ENCODE measurements at regions of chrX and their contacts with region 1.

Region 1: DNA sequence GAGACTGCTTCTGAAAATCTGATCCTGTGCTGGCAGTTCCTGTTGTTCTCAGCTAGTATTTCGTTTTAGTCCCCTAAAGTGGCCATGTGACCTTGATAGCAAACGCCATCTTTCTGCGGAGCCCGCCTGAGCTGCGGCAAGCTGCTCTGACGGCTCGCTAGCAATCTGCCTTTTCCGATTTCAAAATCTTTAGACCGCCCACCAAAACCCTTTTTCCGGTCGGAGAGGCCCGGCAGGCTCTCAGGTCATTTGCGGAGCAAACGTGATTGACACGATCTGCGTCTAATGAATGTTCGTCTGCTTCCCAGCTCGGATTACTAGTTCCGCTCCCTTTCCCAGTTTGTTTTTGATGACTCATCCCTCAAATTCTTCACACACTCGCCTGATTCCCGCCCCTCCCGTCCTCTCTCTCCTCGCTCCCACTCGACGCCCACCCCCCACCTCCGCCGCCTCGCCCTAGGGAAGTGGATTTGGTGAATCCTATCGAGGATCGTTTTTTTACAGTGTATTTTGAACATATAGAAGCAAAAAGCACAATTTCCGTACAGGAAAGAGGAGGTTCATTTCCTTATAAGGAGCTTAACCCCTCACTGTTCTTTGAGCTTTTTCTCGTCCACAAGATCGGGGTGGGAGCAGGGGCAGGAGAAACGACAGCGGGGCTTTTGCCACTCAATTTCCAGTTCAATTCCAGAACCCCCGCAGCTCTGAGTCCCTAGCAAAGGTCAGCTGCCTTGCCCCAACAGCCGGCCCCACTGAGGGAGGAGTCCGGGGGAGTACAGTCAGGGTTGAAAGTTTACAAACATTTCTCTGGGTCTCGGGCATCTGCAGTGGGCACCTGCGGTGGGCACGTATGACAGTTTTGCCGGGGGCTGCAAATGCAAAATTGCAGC is 37.5 kb downstream of the NLGN3 start:
- DNase-seq: peak; percentile 90
- ATAC-seq: peak; percentile 89
- H3K4me3 ChIP-seq: peak overlapping the region; percentile 60 to 77 (median 66)
- H3K4me3 Mint-ChIP-seq: peak overlapping the region; percentile 98
- H3K27ac ChIP-seq: peak overlapping the region; percentile 87 to 92
- H3K27ac Mint-ChIP-seq: peak overlapping the region; percentile 99
- H3K4me1 ChIP-seq: peaks cover 5 to 15% of the 10 kb centered on the region in 2 donors
- H3K4me1 Mint-ChIP-seq: peaks cover 15% of the 10 kb centered on the region
- H3K27me3 ChIP-seq: no peaks in the 10 kb centered on the region
- H3K27me3 Mint-ChIP-seq: no peaks in the 10 kb centered on the region
- CTCF ChIP-seq: no peak

Region 2: GRCh38 chrX:70769659-70770232 is 412.4 kb before region 1 on chrX:
- CTCF ChIA-PET with region 1: interaction called, 14 read pairs
- POLR2A ChIA-PET with region 1: no interaction called
- intact Hi-C with region 1: no loop called
- DNase-seq: peak; percentile 14
- ATAC-seq: no peak
- H3K4me3 ChIP-seq: no peak overlapping the region
- H3K4me3 Mint-ChIP-seq: no peak overlapping the region
- H3K27ac ChIP-seq: no peak overlapping the region
- H3K27ac Mint-ChIP-seq: no peak overlapping the region
- H3K4me1 ChIP-seq: no peaks in the 10 kb centered on the region
- H3K4me1 Mint-ChIP-seq: no peaks in the 10 kb centered on the region
- H3K27me3 ChIP-seq: no peaks in the 10 kb centered on the region
- H3K27me3 Mint-ChIP-seq: no peaks in the 10 kb centered on the region
- CTCF ChIP-seq: peak; percentile 62

Region 3: GRCh38 chrX:71017389-71017944 is 164.7 kb before region 1 on chrX:
- CTCF ChIA-PET with region 1: no interaction called
- POLR2A ChIA-PET with region 1: no interaction called
- intact Hi-C with region 1: no loop called
- DNase-seq: no peak
- ATAC-seq: no peak
- H3K4me3 ChIP-seq: no peak overlapping the region
- H3K4me3 Mint-ChIP-seq: no peak overlapping the region
- H3K27ac ChIP-seq: no peak overlapping the region
- H3K27ac Mint-ChIP-seq: no peak overlapping the region
- H3K4me1 ChIP-seq: no peaks in the 10 kb centered on the region
- H3K4me1 Mint-ChIP-seq: no peaks in the 10 kb centered on the region
- H3K27me3 ChIP-seq: no peaks in the 10 kb centered on the region
- H3K27me3 Mint-ChIP-seq: no peaks in the 10 kb centered on the region
- CTCF ChIP-seq: no peak

Region 4: DNA sequence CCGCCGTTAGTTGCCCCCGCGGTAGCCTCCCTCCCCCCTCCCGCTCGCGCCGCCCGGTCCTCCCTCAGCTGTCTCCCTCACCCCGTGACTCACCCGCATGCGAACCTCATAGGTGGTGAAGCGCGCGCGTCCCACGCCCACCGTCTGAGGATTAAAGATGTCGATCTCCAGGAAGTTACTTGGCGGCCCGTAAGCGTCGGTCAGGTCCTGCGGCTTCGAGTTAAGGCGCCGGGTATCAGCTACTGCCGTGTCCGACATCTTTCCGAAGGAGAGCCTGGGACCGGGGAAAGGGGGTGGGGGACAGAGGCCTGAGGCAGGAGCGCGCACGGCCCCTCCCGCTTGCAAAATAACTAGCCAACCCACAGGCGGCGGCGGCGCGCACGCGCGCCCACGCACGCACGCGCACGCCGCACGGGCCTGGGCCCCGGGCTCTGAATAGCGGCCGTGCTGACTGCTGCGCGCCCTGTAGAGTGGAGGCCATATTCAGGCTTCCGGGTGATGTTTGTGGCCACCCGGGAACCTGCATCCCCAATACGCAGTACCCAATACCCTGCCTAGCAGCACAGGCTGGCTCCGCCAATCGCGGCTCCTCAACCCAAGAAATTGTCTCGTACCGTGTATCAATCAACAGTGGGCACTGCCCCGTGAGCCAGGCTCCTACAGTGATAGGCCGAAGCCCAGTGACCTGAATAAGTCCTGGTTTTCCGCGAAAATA is 113.9 kb before region 1 on chrX and contains the start of gene SNX12:
- CTCF ChIA-PET with region 1: interaction called, 4 read pairs
- POLR2A ChIA-PET with region 1: interaction called, 13 read pairs
- intact Hi-C with region 1: loop called (anchors 1 kb)
- DNase-seq: peak; percentile 93
- ATAC-seq: peak; percentile 93
- H3K4me3 ChIP-seq: peak within 1 kb of the TSS; percentile 74 to 79 (median 76)
- H3K4me3 Mint-ChIP-seq: peak within 1 kb of the TSS; percentile 96
- H3K27ac ChIP-seq: peak within 1 kb of the TSS; percentile 74 to 85
- H3K27ac Mint-ChIP-seq: peak within 1 kb of the TSS; percentile 96
- H3K4me1 ChIP-seq: peaks cover 0 to 12% of the 10 kb centered on the region in 2 donors
- H3K4me1 Mint-ChIP-seq: peaks cover 17% of the 10 kb centered on the region
- H3K27me3 ChIP-seq: no peaks in the 10 kb centered on the region
- H3K27me3 Mint-ChIP-seq: no peaks in the 10 kb centered on the region
- CTCF ChIP-seq: no peak
- total RNA-seq, gene SNX12: 32.6 and 42.9 TPM in 2 replicates

Region 5: GRCh38 chrX:71111141-71111843 is 70.9 kb before region 1 on chrX and contains the start of gene IL2RG:
- CTCF ChIA-PET with region 1: no interaction called
- POLR2A ChIA-PET with region 1: interaction called, 6 read pairs
- intact Hi-C with region 1: loop called (anchors 5 kb)
- DNase-seq: peak; percentile 90
- ATAC-seq: peak; percentile 93
- H3K4me3 ChIP-seq: peak within 1 kb of the TSS; percentile 75 to 90 (median 82)
- H3K4me3 Mint-ChIP-seq: peak within 1 kb of the TSS; percentile 98
- H3K27ac ChIP-seq: peak within 1 kb of the TSS; percentile 98
- H3K27ac Mint-ChIP-seq: peak within 1 kb of the TSS; percentile 99
- H3K4me1 ChIP-seq: peaks cover 53 to 65% of the 10 kb centered on the region in 2 donors
- H3K4me1 Mint-ChIP-seq: peaks cover 63% of the 10 kb centered on the region
- H3K27me3 ChIP-seq: no peaks in the 10 kb centered on the region
- H3K27me3 Mint-ChIP-seq: no peaks in the 10 kb centered on the region
- CTCF ChIP-seq: no peak
- total RNA-seq, gene IL2RG: 276 and 297 TPM in 2 replicates

Region 6: GRCh38 chrX:71254092-71254941 is 72.2 kb after region 1 on chrX and contains the start of gene ZMYM3:
- CTCF ChIA-PET with region 1: interaction called, 3 read pairs
- POLR2A ChIA-PET with region 1: interaction called, 3 read pairs
- intact Hi-C with region 1: loop called (anchors 1 kb)
- DNase-seq: peak; percentile 85
- ATAC-seq: peak; percentile 79
- H3K4me3 ChIP-seq: peak within 1 kb of the TSS; percentile 65 to 84 (median 80)
- H3K4me3 Mint-ChIP-seq: peak within 1 kb of the TSS; percentile 88
- H3K27ac ChIP-seq: peak within 1 kb of the TSS; percentile 84 to 87
- H3K27ac Mint-ChIP-seq: peak within 1 kb of the TSS; percentile 89
- H3K4me1 ChIP-seq: peaks cover 15 to 22% of the 10 kb centered on the region in 2 donors
- H3K4me1 Mint-ChIP-seq: peaks cover 23% of the 10 kb centered on the region
- H3K27me3 ChIP-seq: no peaks in the 10 kb centered on the region
- H3K27me3 Mint-ChIP-seq: no peaks in the 10 kb centered on the region
- CTCF ChIP-seq: no peak
- total RNA-seq, gene ZMYM3: 40.0 and 40.6 TPM in 2 replicates

Region 7: GRCh38 chrX:71365876-71366673 is 183.9 kb after region 1 on chrX and contains the start of gene TAF1:
- CTCF ChIA-PET with region 1: interaction called, 3 read pairs
- POLR2A ChIA-PET with region 1: interaction called, 17 read pairs
- intact Hi-C with region 1: loop called (anchors 1 kb)
- DNase-seq: peak; percentile 94
- ATAC-seq: peak; percentile 90
- H3K4me3 ChIP-seq: peak within 1 kb of the TSS; percentile 67 to 78 (median 73)
- H3K4me3 Mint-ChIP-seq: peak within 1 kb of the TSS; percentile 97
- H3K27ac ChIP-seq: peak within 1 kb of the TSS; percentile 80 to 95
- H3K27ac Mint-ChIP-seq: peak within 1 kb of the TSS; percentile 99
- H3K4me1 ChIP-seq: peaks cover 12 to 24% of the 10 kb centered on the region in 2 donors
- H3K4me1 Mint-ChIP-seq: peaks cover 24% of the 10 kb centered on the region
- H3K27me3 ChIP-seq: no peaks in the 10 kb centered on the region
- H3K27me3 Mint-ChIP-seq: no peaks in the 10 kb centered on the region
- CTCF ChIP-seq: no peak
- total RNA-seq, gene TAF1: 93.5 and 97.5 TPM in 2 replicates

Region 8: DNA sequence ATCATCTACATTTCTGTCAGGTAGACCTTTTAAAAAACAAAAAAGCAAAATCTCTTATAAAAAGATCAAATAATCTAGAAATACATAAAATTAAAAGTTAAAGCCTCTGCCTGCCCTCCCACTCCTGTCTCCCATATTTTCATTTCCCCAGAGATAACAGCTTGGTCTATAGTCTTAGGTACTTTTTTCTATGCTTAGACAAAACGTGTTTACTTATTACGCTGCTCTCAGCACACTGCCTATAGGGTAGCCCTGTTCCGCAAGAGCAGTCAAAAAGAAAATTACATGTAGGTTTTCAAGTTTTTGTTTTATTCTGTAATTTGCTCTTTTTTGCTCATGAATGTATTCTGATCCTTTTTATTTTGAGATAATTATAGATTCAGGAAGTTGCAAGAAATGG is 257.3 kb after region 1 on chrX:
- CTCF ChIA-PET with region 1: no interaction called
- POLR2A ChIA-PET with region 1: no interaction called
- intact Hi-C with region 1: no loop called
- DNase-seq: peak; percentile 5
- ATAC-seq: no peak
- H3K4me3 ChIP-seq: no peak overlapping the region
- H3K4me3 Mint-ChIP-seq: no peak overlapping the region
- H3K27ac ChIP-seq: peak overlapping the region in 1 of 2 donors; percentile 57
- H3K27ac Mint-ChIP-seq: peak overlapping the region; percentile 64
- H3K4me1 ChIP-seq: peaks cover 0 to 6% of the 10 kb centered on the region in 2 donors
- H3K4me1 Mint-ChIP-seq: peaks cover 18% of the 10 kb centered on the region
- H3K27me3 ChIP-seq: no peaks in the 10 kb centered on the region
- H3K27me3 Mint-ChIP-seq: no peaks in the 10 kb centered on the region
- CTCF ChIP-seq: no peak

Measured in B cell (primary cell).